ENCODE measurements at regions of chr15 and their contacts with region 1.

Region 1: DNA sequence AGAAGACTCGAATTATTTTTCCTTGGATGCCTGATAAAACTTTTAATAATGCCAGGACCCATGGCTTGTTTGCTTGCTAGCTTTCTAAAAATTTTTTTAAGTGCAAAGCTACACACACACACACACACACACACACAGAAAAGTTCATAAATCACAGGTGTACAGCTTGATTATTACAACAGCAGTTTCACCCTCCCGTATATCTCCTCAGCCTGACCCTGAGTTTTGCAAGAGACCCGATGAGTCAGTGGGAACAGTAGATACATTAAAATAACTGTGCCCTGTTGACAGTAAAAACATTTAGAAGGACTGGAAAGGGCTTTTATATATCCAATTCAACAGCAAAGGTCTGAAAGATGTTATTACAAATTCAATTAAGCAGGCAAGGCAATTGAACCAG is 46.7 kb downstream of the EMC4 start:
- DNase-seq: peak in 1 of 5 donors; percentile 33
- ATAC-seq: peak in 3 of 4 donors; percentile 67 to 87 (median 86)
- H3K4me3 ChIP-seq: no peak overlapping the region
- H3K27ac ChIP-seq: peak overlapping the region in 3 of 12 donors; percentile 10 to 23 (median 13)
- H3K4me1 ChIP-seq: peaks cover 0 to 6% (median under 1%) of the 10 kb centered on the region in 12 donors
- H3K27me3 ChIP-seq: no peaks in the 10 kb centered on the region
- CTCF ChIP-seq: no peak
- POLR2A ChIP-seq: no peak

Region 2: DNA sequence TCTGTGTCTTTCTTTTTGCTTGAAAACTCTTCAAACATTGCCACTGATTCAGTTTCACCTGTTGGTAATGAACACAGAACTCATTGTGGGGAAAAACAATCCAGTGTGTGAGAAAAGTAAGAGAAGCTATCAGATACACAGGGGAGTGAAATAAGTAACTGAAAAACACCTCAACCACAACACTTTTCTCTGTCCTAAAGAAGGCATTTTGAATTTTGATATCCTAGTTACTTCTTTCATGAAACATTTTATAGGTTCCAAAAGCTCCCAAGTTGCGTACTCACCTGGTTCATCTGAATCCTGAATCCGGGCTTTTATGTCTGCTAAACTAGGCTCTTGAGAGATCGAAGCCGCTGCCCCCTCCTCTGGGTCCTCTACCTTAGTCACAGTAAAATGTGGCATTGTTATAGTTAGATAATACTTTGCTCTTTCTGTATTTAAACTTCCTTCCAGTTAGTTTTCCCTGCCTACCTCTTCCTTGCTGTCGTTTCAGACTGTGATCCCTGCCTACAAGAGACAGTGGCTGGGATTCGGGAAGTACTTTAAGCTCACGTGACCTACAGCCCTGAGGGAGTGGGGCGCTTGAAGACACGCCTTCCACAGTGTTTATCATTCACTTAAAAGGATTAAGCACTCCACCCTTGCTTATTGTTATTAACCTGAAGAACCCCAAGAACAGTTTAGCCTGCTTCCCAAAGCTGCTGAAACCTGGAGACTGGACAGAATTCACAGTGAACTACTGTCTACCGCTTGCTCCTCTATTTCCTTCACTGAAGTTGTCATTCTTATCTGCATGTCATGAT is 47.0 kb after region 1 on chr15:
- intact Hi-C with region 1: loop called in 2 of 10 experiments (anchors 5 to 10 kb)
- DNase-seq: peak in 4 of 5 donors; percentile 55 to 75 (median 67)
- ATAC-seq: peak; percentile 92 to 98 (median 98)
- H3K4me3 ChIP-seq: peak overlapping the region; percentile 12 to 65 (median 62)
- H3K27ac ChIP-seq: peak overlapping the region; percentile 2 to 79 (median 52)
- H3K4me1 ChIP-seq: peaks cover 0 to 30% (median 14%) of the 10 kb centered on the region in 12 donors
- H3K27me3 ChIP-seq: no peaks in the 10 kb centered on the region
- CTCF ChIP-seq: no peak
- POLR2A ChIP-seq: peak in 1 of 2 donors; percentile 49

Region 3: DNA sequence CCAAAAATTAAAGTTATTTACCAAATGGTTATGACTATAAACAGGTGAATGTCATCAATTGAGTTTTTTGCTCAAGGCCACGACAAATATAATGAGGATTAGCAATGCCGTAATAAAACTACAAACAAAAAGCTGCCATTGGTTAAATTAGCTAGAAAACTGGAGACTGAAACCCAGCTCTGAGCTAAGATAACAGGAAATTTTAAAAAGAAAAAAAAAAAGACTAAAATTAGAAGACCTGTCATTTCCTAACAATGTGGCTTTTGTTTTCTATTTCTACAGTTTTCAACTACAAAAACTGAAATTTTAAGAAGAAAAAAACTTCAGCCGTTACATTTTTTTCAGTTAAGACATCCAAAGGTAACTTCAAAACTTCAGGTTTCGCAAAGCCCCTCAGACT is 56.4 kb after region 1 on chr15:
- intact Hi-C with region 1: loop called in 4 of 10 experiments (anchors 10 kb)
- DNase-seq: no peak
- ATAC-seq: no peak
- H3K4me3 ChIP-seq: no peak overlapping the region
- H3K27ac ChIP-seq: peak overlapping the region in 2 of 12 donors; percentile 10 to 47
- H3K4me1 ChIP-seq: peaks cover 0 to 35% (median 1%) of the 10 kb centered on the region in 12 donors
- H3K27me3 ChIP-seq: no peaks in the 10 kb centered on the region
- CTCF ChIP-seq: no peak
- POLR2A ChIP-seq: no peak

Measured in heart left ventricle (tissue), 16 donors.